Calu3 (cell line): ENCODE measurements at regions of chr17 and their contacts with region 1.

Region 1: DNA sequence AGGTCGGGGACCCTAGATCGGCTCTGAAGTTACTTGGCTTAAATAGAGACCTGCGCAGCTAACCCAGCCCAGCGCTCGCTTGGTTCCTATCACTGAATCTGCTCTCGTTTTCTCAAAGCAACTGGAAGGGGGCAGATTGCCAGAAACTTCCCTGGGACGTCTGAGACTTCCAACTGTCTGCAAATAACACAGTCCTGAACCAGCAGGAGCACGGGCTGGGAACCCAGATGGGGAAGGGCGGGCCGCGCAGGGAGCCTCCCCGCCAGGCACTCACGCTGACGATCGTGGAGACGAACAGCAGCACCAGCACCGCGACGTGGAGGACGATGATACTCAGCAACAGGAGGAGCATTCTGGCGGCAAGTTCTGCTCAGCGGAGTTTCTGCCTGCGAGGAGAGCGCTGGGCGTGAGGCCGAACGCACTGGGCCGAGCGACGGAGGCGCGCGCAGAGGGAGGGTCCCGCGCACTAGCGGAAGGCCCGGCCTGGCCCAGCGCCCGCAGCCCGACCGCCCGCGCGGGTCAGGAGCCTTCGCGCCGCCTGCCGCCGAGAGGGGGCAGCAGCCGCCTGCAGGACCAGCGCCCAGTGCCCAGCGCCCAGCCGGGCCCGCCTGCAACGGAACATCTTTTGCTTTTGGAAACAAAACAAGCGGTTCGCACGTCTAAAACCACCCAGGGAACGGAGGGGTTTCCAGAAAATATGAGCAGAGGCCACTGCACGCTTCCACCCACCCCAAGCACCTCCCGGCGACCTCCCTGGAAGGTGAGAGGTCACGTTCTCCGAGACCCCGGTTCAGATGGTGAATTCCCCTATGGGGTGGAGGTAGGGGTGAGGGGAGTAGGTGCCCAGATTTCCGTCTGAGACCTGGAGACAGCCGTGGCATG is 4.5 kb downstream of the PMP22 start:
- DNase-seq: peak; percentile 77
- H3K4me3 Mint-ChIP-seq: peak overlapping the region; percentile 70
- H3K27ac Mint-ChIP-seq: no peak overlapping the region
- H3K4me1 Mint-ChIP-seq: peaks cover 18% of the 10 kb centered on the region
- H3K27me3 Mint-ChIP-seq: peaks cover 33% of the 10 kb centered on the region
- CTCF ChIP-seq: peak; percentile 41

Region 2: GRCh38 chr17:15076991-15077663 is 183.5 kb before region 1 on chr17:
- CTCF ChIA-PET with region 1: no interaction called
- intact Hi-C with region 1: no loop called
- DNase-seq: no peak
- H3K4me3 Mint-ChIP-seq: no peak overlapping the region
- H3K27ac Mint-ChIP-seq: no peak overlapping the region
- H3K4me1 Mint-ChIP-seq: no peaks in the 10 kb centered on the region
- H3K27me3 Mint-ChIP-seq: peaks cover 12% of the 10 kb centered on the region
- CTCF ChIP-seq: no peak

Region 3: GRCh38 chr17:15319452-15320010 is 58.9 kb after region 1 on chr17:
- CTCF ChIA-PET with region 1: no interaction called
- intact Hi-C with region 1: no loop called
- DNase-seq: no peak
- H3K4me3 Mint-ChIP-seq: no peak overlapping the region
- H3K27ac Mint-ChIP-seq: no peak overlapping the region
- H3K4me1 Mint-ChIP-seq: no peaks in the 10 kb centered on the region
- H3K27me3 Mint-ChIP-seq: peaks cover 31% of the 10 kb centered on the region
- CTCF ChIP-seq: no peak

Region 4: DNA sequence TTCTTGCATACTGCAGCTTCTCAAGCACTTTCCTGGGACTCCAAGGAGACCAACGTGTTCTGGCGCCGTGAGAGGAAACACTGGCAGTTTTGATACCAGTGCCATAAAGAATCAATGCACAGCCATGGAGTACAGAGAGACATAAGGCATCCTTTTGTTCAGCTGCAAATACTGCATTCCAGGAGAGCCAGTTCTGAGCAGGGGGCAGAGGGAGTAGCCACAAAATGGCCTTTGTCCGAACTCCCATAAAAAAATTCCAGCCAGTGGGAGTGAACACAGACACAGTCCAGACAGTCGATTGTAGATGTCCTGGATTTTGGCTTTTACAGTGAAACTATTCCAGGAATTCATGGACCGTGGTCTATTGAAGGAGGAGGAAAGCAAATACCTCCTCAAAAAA is 117.0 kb after region 1 on chr17:
- CTCF ChIA-PET with region 1: interaction called, 3 read pairs
- intact Hi-C with region 1: loop called (anchors 1 kb)
- DNase-seq: peak; percentile 32
- H3K4me3 Mint-ChIP-seq: no peak overlapping the region
- H3K27ac Mint-ChIP-seq: peak overlapping the region; percentile 33
- H3K4me1 Mint-ChIP-seq: peaks cover 15% of the 10 kb centered on the region
- H3K27me3 Mint-ChIP-seq: no peaks in the 10 kb centered on the region
- CTCF ChIP-seq: no peak